ENCODE measurements at regions of chr20 and their contacts with region 1.

Region 1: GRCh38 chr20:63657937-63658748 is at the start of gene RTEL1:
- DNase-seq: peak; percentile 95
- ATAC-seq: peak; percentile 88
- H3K4me3 Mint-ChIP-seq: peak within 1 kb of the TSS; percentile 97
- H3K27ac Mint-ChIP-seq: peak within 1 kb of the TSS; percentile 93
- H3K4me1 Mint-ChIP-seq: peaks cover 27% of the 10 kb centered on the region
- H3K27me3 Mint-ChIP-seq: peaks cover 3% of the 10 kb centered on the region
- CTCF ChIP-seq: no peak
- total RNA-seq, gene RTEL1: 24.1 and 33.8 TPM in 2 replicates

Region 2: GRCh38 chr20:63627129-63627750 is 30.9 kb before region 1 on chr20:
- CTCF ChIA-PET with region 1: no interaction called
- POLR2A ChIA-PET with region 1: interaction called, 20 read pairs
- intact Hi-C with region 1: loop called (anchors 1 kb)
- DNase-seq: peak; percentile 97
- ATAC-seq: peak; percentile 77
- H3K4me3 Mint-ChIP-seq: peak overlapping the region; percentile 91
- H3K27ac Mint-ChIP-seq: peak overlapping the region; percentile 93
- H3K4me1 Mint-ChIP-seq: peaks cover 45% of the 10 kb centered on the region
- H3K27me3 Mint-ChIP-seq: no peaks in the 10 kb centered on the region
- CTCF ChIP-seq: no peak

Region 3: GRCh38 chr20:63739130-63740069 is 81.3 kb after region 1 on chr20 and contains the start of gene SLC2A4RG:
- CTCF ChIA-PET with region 1: no interaction called
- POLR2A ChIA-PET with region 1: interaction called, 7 read pairs
- intact Hi-C with region 1: loop called (anchors 10 kb)
- DNase-seq: peak; percentile 73
- ATAC-seq: peak; percentile 65
- H3K4me3 Mint-ChIP-seq: peak within 1 kb of the TSS; percentile 48
- H3K27ac Mint-ChIP-seq: no peak within 1 kb of the TSS
- H3K4me1 Mint-ChIP-seq: peaks cover 28% of the 10 kb centered on the region
- H3K27me3 Mint-ChIP-seq: no peaks in the 10 kb centered on the region
- CTCF ChIP-seq: no peak
- total RNA-seq, gene SLC2A4RG: 20.9 and 28.1 TPM in 2 replicates

Region 4: GRCh38 chr20:63955827-63956663 is 297.9 kb after region 1 on chr20 and contains the start of gene UCKL1:
- CTCF ChIA-PET with region 1: interaction called, 3 read pairs
- POLR2A ChIA-PET with region 1: interaction called, 7 read pairs
- intact Hi-C with region 1: loop called (anchors 1 kb)
- DNase-seq: peak; percentile 87
- ATAC-seq: peak; percentile 78
- H3K4me3 Mint-ChIP-seq: peak within 1 kb of the TSS; percentile 87
- H3K27ac Mint-ChIP-seq: peak within 1 kb of the TSS; percentile 85
- H3K4me1 Mint-ChIP-seq: peaks cover 49% of the 10 kb centered on the region
- H3K27me3 Mint-ChIP-seq: no peaks in the 10 kb centered on the region
- CTCF ChIP-seq: no peak
- total RNA-seq, gene UCKL1: 43.6 and 49.7 TPM in 2 replicates

Region 5: GRCh38 chr20:63980806-63981728 is 322.9 kb after region 1 on chr20 and contains the start of gene PRPF6:
- CTCF ChIA-PET with region 1: interaction called, 3 read pairs
- POLR2A ChIA-PET with region 1: interaction called, 3 read pairs
- intact Hi-C with region 1: loop called (anchors 5 kb)
- DNase-seq: peak; percentile 90
- ATAC-seq: peak; percentile 65
- H3K4me3 Mint-ChIP-seq: peak within 1 kb of the TSS; percentile 92
- H3K27ac Mint-ChIP-seq: peak within 1 kb of the TSS; percentile 94
- H3K4me1 Mint-ChIP-seq: peaks cover 50% of the 10 kb centered on the region
- H3K27me3 Mint-ChIP-seq: no peaks in the 10 kb centered on the region
- CTCF ChIP-seq: peak; percentile 25
- total RNA-seq, gene PRPF6: 75.7 and 75.8 TPM in 2 replicates